K562 (cell line): ENCODE measurements at regions of chr1 and their contacts with region 1.

Region 1: DNA sequence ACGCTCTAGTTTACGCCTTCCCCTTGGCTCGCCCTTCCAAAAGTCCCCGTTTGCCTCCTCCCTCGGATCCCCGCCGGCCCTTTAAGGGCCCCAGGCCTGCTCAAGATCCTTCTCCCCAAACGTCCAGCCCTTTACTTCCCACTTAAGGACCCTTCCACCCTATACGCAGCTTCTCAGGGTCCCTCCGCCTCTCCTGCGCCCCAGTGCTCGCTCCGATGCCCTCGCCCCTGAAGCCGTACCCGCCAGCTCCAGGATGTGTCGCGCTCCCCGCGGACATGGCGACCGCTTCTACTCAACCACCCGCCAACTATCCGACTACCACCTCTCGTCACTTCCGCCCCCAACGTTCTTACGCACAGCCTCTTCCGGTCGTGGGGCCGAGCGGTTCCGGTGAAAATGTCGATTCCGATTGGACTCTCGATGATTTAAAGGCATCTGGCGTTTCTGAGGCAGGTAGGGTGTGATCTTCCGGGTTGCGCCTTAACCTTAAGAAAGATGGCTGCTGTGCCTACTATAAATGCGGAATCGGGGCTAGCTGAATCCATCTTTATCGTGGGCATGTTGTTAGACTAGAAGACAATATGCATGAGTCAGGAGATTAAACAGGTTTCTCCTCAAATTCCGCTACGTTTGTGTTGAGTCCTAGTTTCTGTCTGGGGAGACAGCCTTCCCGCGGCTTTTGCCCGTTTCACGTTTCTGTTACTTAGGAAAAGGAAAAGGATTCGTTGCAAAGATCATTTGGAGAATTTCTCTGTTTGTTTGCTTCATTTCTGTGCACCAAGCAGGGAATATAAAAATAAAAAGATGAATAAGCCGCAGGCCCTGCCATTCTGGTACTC is at the start of gene KHDC4:
- DNase-seq: peak; percentile 87 to 99 (median 92)
- ATAC-seq: peak; percentile 92
- H3K4me3 ChIP-seq: peak within 1 kb of the TSS; percentile 81
- H3K27ac ChIP-seq: peak within 1 kb of the TSS; percentile 94
- H3K4me1 ChIP-seq: peaks cover 12 to 13% of the 10 kb centered on the region in 2 experiments; a peak in 4 of 5 replicates
- H3K27me3 ChIP-seq: no peaks in the 10 kb centered on the region
- CTCF ChIP-seq: peak in 2 of 3 experiments; percentile 5 to 26; a peak in 2 of 6 replicates
- EP300 ChIP-seq: peak; percentile 46; the same call in 1 of the 2 replicates
- POLR2A ChIP-seq: peak; percentile 99
- RAD21 ChIP-seq: 0 out of 4 replicates have a peak, but pooled peaks of 1 of the 2 experiments have one; percentile 3
- polyA plus RNA-seq, gene KHDC4: 12.1 to 14.4 TPM

Region 2: DNA sequence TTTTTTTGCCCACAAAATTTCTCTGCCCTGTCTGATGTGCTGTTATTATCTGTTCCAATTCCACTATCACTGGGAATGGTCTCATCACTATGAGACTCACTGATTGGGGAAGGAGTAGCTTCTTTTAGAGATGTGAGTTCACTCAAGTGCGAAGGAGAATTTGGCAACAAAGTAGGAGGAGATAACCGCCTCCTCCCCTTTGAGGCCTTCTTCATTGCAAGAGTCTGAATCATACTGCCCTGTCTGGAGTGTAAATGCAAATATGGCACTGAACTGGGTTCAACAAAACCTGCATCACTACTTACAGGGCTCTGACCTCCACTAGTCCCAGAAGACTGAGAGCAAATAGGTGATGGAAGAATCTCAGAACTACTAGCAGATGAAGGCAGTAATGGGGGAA is 455.1 kb before region 1 on chr1:
- CTCF ChIA-PET with region 1: no interaction called
- POLR2A ChIA-PET with region 1: no interaction called
- in situ Hi-C with region 1: no loop called
- intact Hi-C with region 1: no loop called
- DNase-seq: no peak
- ATAC-seq: 0 out of 3 replicates have a peak, but pooled peaks have one; percentile 32
- H3K4me3 ChIP-seq: no peak overlapping the region
- H3K27ac ChIP-seq: no peak overlapping the region
- H3K4me1 ChIP-seq: peaks cover 8% of the 10 kb centered on the region in 2 experiments
- H3K27me3 ChIP-seq: no peaks in the 10 kb centered on the region
- CTCF ChIP-seq: no peak
- EP300 ChIP-seq: no peak
- POLR2A ChIP-seq: no peak
- RAD21 ChIP-seq: no peak

Region 3: GRCh38 chr1:155911156-155912055 is 22.9 kb before region 1 on chr1 and contains the start of gene RIT1:
- CTCF ChIA-PET with region 1: no interaction called
- POLR2A ChIA-PET with region 1: interaction called, 13 read pairs
- in situ Hi-C with region 1: no loop called
- intact Hi-C with region 1: no loop called
- DNase-seq: peak; percentile 91 to 95 (median 94)
- ATAC-seq: peak; percentile 95
- H3K4me3 ChIP-seq: peak within 1 kb of the TSS; percentile 48
- H3K27ac ChIP-seq: peak within 1 kb of the TSS; percentile 73
- H3K4me1 ChIP-seq: peaks cover 3 to 7% of the 10 kb centered on the region in 2 experiments; a peak in 2 of 5 replicates
- H3K27me3 ChIP-seq: no peaks in the 10 kb centered on the region
- CTCF ChIP-seq: peak in 1 of 3 experiments; percentile 12; a peak in 1 of 6 replicates
- EP300 ChIP-seq: no peak
- POLR2A ChIP-seq: peak; percentile 50; the same call in 1 of the 2 replicates
- RAD21 ChIP-seq: no peak
- polyA plus RNA-seq, gene RIT1: 53.7 to 57.1 TPM

Region 4: DNA sequence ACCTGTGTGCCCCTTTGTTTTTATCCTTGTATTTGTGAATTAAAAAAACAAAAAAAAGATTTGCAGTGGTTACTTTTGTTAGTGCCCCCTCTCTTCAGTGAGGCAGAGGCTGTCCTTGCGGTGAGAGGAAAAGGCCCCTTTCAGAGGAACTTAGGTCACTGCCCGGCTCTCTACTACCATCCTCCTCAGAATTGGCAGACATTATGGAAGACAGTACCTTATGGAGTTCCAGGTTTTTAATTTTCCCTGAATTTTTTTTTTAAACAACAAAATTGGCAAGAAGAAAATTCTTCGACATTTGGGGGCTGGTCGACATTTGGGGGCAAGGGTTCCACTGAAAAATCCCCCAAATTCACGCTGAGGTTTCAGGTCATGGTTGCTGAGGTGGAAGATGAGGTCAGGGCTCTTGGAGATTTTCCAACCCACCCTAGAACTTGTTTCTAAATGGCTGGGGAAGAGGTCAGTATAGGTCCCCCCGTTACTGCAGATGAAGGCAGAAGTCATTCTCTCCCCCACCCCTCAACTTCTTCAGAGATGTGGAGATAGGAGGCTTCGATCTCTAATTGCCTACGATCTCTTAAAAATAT is 12.4 kb after region 1 on chr1:
- CTCF ChIA-PET with region 1: no interaction called
- POLR2A ChIA-PET with region 1: interaction called, 13 read pairs
- in situ Hi-C with region 1: no loop called
- intact Hi-C with region 1: no loop called
- DNase-seq: no peak
- ATAC-seq: no peak
- H3K4me3 ChIP-seq: no peak overlapping the region
- H3K27ac ChIP-seq: no peak overlapping the region
- H3K4me1 ChIP-seq: peaks cover 0 to 10% of the 10 kb centered on the region in 2 experiments; a peak in 2 of 5 replicates
- H3K27me3 ChIP-seq: no peaks in the 10 kb centered on the region
- CTCF ChIP-seq: no peak
- EP300 ChIP-seq: no peak
- POLR2A ChIP-seq: no peak
- RAD21 ChIP-seq: no peak

Region 5: DNA sequence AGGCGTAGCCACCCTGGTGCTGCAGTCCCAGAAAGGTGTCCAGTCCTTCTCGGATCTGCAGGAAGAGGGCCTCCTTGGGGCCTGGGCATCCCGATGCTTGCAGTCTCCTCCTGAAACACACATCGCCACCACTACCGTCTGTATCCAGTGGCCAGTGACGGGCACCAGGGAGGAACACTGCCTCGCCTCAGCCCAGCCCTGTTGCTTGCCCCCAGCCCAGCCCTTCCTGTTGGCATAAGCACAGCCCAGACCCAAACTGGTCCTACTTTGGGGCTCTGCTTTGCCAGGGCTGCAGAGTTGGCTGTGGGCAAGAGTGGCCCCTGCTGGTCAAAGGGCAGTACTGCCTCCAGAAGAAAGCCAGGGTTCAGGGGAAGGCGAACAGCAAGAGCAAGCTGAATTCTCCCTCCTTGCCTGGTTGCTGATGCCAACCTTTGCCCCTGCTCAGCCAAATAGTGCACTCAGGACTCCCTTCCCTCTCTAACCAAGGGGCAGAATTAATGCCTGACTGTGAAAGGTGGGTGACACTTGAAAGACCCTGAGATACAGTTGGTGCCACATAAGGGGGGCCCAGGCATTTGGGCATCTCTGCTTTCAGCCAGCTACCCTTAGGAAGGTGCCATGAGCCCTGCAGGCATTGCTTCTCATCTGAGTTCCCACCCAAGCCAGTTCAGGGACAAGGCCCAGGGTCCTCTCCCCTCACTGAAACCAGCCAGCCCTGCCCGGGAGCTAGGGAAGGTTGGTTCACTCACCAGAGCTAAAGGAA is 55.1 kb after region 1 on chr1:
- CTCF ChIA-PET with region 1: interaction called, 42 read pairs
- POLR2A ChIA-PET with region 1: interaction called, 41 read pairs
- in situ Hi-C with region 1: no loop called
- intact Hi-C with region 1: loop called (anchors 1 kb)
- DNase-seq: peak; percentile 69 to 76 (median 72)
- ATAC-seq: peak; percentile 95
- H3K4me3 ChIP-seq: no peak overlapping the region
- H3K27ac ChIP-seq: no peak overlapping the region
- H3K4me1 ChIP-seq: peaks cover 2 to 7% of the 10 kb centered on the region in 2 experiments; a peak in 4 of 5 replicates
- H3K27me3 ChIP-seq: no peaks in the 10 kb centered on the region
- CTCF ChIP-seq: peak; percentile 92 to 97 (median 95)
- EP300 ChIP-seq: no peak
- POLR2A ChIP-seq: no peak
- RAD21 ChIP-seq: peak; percentile 94 to 96

Region 6: GRCh38 chr1:156065212-156065611 is 130.9 kb after region 1 on chr1:
- CTCF ChIA-PET with region 1: interaction called, 7 read pairs
- POLR2A ChIA-PET with region 1: interaction called, 9 read pairs
- in situ Hi-C with region 1: loop called (anchors 5 kb)
- intact Hi-C with region 1: loop called (anchors 1 kb)
- DNase-seq: no peak
- ATAC-seq: no peak
- H3K4me3 ChIP-seq: no peak overlapping the region
- H3K27ac ChIP-seq: no peak overlapping the region
- H3K4me1 ChIP-seq: peaks cover 6 to 21% of the 10 kb centered on the region in 2 experiments; a peak in 4 of 5 replicates
- H3K27me3 ChIP-seq: no peaks in the 10 kb centered on the region
- CTCF ChIP-seq: no peak
- EP300 ChIP-seq: no peak
- POLR2A ChIP-seq: no peak
- RAD21 ChIP-seq: no peak

Region 7: GRCh38 chr1:156268336-156268735 is 334.0 kb after region 1 on chr1:
- CTCF ChIA-PET with region 1: no interaction called
- POLR2A ChIA-PET with region 1: no interaction called
- in situ Hi-C with region 1: no loop called
- intact Hi-C with region 1: no loop called
- DNase-seq: no peak
- ATAC-seq: no peak
- H3K4me3 ChIP-seq: no peak overlapping the region
- H3K27ac ChIP-seq: no peak overlapping the region
- H3K4me1 ChIP-seq: no peaks in the 10 kb centered on the region
- H3K27me3 ChIP-seq: no peaks in the 10 kb centered on the region
- CTCF ChIP-seq: no peak
- EP300 ChIP-seq: no peak
- POLR2A ChIP-seq: no peak
- RAD21 ChIP-seq: no peak